Panc1 (cell line): ENCODE measurements at regions of chr13 and their contacts with region 1.

Region 1: DNA sequence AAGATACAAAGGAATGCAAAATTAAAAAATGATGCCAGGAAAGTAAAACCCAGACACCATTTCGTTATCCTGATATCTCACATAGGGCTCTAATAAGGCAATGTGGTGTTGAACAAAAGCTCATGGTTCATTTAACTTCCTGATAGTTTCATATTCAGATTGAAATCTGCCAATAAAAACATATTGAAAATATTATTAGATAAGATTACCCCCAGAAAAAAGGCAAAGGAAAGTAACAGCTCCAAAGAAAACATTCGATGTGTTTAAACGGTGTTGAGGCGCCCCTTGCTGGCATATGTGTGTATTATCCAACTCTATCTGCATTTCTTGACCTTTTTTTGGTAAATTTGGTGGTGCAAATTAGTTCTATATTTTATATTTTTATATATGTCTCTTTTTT is 75.9 kb downstream of the ESD start:
- DNase-seq: no peak
- ATAC-seq: no peak
- H3K4me3 ChIP-seq: no peak overlapping the region
- H3K27ac ChIP-seq: no peak overlapping the region
- H3K4me1 ChIP-seq: no peaks in the 10 kb centered on the region
- H3K27me3 ChIP-seq: no peaks in the 10 kb centered on the region
- CTCF ChIP-seq: peak; percentile 58; the same call in 1 of the 2 replicates

Region 2: GRCh38 chr13:46492946-46493345 is 228.1 kb before region 1 on chr13:
- CTCF ChIA-PET with region 1: no interaction called
- POLR2A ChIA-PET with region 1: no interaction called
- in situ Hi-C with region 1: no loop called
- intact Hi-C with region 1: loop called (anchors 2 kb)
- DNase-seq: no peak
- ATAC-seq: no peak
- H3K4me3 ChIP-seq: no peak overlapping the region
- H3K27ac ChIP-seq: no peak overlapping the region
- H3K4me1 ChIP-seq: no peaks in the 10 kb centered on the region
- H3K27me3 ChIP-seq: no peaks in the 10 kb centered on the region
- CTCF ChIP-seq: peak; percentile 53; the same call in 1 of the 2 replicates

Region 3: DNA sequence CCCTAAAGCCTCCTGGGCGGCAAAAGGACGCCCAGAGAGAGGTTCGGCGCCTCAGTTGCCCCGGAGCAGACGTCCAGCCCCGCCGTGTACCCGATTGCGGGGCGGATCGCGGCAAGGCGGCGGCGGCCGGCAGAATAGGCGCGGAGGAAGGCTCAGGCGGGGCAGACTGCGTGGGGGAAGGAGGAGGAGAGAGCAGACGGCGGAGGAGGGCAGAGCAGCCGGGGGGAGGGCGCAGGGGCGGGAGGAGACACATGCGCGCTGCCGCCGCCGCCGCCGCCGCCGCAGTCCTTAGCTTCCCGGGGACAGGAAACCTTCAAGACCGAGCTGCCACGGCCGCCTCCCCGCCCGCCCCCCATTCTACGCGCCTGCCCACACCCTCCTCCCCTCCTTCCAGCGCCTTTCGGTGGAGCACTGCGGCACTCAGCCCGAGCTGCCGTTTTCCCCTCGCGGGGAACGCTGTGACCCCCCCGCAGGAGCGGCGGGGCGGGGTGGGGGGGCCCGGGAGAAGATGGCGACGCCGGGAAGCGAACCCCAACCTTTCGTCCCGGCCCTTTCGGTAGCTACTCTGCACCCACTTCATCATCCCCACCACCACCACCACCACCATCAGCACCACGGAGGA is 168.1 kb before region 1 on chr13 and contains the start of gene LRCH1:
- CTCF ChIA-PET with region 1: interaction called, 12 read pairs
- POLR2A ChIA-PET with region 1: no interaction called
- in situ Hi-C with region 1: no loop called
- intact Hi-C with region 1: loop called (anchors 1 kb)
- DNase-seq: no peak
- ATAC-seq: peak; percentile 93
- H3K4me3 ChIP-seq: peak within 1 kb of the TSS; percentile 80
- H3K27ac ChIP-seq: peak within 1 kb of the TSS; percentile 80
- H3K4me1 ChIP-seq: peaks cover 11% of the 10 kb centered on the region
- H3K27me3 ChIP-seq: no peaks in the 10 kb centered on the region
- CTCF ChIP-seq: no peak
- total RNA-seq, gene LRCH1: 7.9 TPM

Region 4: DNA sequence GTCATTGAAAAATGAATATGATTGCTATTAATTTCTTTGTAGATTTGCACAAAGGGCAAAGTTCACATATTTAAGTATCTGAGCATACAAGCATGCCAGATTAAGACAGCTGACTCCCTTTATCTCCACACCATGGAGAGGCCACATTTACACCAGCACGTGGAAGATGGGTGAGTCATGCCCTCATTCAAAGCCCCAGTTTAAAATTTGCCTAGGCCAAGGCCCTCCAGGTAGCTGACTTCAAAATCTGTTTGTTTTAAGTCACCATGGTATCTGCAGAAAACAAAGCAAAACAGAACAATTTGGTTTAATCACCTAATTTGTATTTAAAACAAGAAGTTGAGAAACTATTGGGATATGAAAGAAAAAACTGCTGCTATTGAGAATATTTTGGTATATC is 33.2 kb before region 1 on chr13:
- CTCF ChIA-PET with region 1: no interaction called
- POLR2A ChIA-PET with region 1: no interaction called
- in situ Hi-C with region 1: no loop called
- intact Hi-C with region 1: no loop called
- DNase-seq: no peak
- ATAC-seq: no peak
- H3K4me3 ChIP-seq: no peak overlapping the region
- H3K27ac ChIP-seq: no peak overlapping the region
- H3K4me1 ChIP-seq: no peaks in the 10 kb centered on the region
- H3K27me3 ChIP-seq: no peaks in the 10 kb centered on the region
- CTCF ChIP-seq: no peak

Region 5: DNA sequence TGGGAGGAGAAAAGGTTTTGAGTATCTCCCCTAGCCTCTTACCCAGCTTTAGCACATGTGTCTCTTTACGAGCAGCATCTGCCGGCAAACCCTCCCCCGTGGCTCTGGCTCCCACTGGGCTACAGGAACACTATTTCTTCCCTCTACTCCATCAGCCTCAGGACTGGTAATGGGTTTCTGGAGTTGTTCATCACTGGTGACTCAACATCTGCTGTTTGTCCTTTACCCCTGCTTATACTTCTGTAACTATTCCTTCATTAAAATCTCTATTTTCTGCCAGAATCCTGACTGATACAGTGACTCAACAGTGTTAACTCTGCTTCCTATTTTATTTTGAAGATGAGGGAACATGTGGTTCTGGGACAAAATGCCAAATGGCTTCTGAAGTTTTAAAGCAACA is 613.1 kb after region 1 on chr13:
- CTCF ChIA-PET with region 1: no interaction called
- POLR2A ChIA-PET with region 1: no interaction called
- in situ Hi-C with region 1: no loop called
- intact Hi-C with region 1: no loop called
- DNase-seq: no peak
- ATAC-seq: no peak
- H3K4me3 ChIP-seq: no peak overlapping the region
- H3K27ac ChIP-seq: no peak overlapping the region
- H3K4me1 ChIP-seq: no peaks in the 10 kb centered on the region
- H3K27me3 ChIP-seq: no peaks in the 10 kb centered on the region
- CTCF ChIP-seq: no peak